PC-9 (cell line): ENCODE measurements at regions of chr1 and their contacts with region 1.

Region 1: DNA sequence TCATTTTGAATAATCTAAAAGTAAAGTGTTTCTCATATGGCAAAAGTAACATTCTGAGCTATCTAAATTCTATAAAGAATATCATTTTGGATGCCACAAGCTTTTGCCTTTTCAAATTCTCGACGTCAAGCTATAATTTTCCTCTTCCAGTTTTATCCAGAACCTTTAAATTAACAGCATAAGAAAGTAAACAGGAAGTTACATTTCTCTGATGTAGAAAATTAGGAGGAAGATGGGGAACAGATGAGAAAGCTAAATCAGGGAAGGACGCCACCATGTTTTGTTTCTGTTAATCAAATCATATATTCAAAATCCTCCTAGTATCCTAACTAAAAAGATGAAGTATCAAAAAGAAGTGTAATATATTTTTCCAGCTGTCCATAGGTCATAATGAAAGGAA is 8.8 kb upstream of the CAMSAP2 start:
- DNase-seq: no peak
- H3K4me3 ChIP-seq: no peak overlapping the region
- H3K27ac ChIP-seq: no peak overlapping the region
- H3K4me1 ChIP-seq: no peaks in the 10 kb centered on the region
- H3K27me3 ChIP-seq: no peaks in the 10 kb centered on the region
- CTCF ChIP-seq: no peak

Region 2: GRCh38 chr1:200740291-200741208 is 10.7 kb after region 1 on chr1:
- CTCF ChIA-PET with region 1: no interaction called
- POLR2A ChIA-PET with region 1: no interaction called
- intact Hi-C with region 1: no loop called
- DNase-seq: no peak
- H3K4me3 ChIP-seq: peak overlapping the region; percentile 99
- H3K27ac ChIP-seq: no peak overlapping the region
- H3K4me1 ChIP-seq: peaks cover 44% of the 10 kb centered on the region
- H3K27me3 ChIP-seq: no peaks in the 10 kb centered on the region
- CTCF ChIP-seq: no peak

Region 3: DNA sequence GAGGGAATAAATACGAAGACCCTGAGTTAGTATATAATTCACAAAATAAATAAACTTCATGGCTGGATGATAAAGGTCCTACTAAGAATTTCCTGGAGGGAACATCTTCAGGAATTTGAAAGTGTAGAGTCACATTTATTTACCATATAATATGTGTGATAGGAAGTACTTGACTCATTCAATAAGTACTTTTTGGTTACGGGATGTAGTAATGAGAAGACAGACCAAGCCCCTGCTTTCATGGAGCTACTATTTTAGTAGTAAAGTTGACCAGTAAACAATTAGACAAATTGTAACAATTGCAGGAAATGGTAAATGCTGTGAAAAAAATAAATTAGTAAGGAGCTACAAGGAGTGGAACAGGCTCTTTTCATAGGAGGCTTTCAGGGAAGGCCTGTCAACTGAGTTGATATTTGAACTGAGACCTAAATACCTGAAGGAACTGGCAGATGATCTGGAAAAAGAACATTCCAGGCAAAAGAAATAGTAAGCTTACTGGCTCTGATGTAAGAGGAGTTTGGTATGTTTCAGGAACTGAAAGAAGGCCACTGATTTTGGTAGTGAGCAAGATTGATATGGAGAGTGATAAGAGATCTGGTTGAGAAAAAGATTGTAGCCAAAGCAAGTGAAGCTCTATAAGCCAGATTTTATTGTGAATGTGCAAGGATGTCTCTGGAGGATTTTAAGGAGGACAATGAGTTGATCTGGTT is 45.0 kb after region 1 on chr1:
- CTCF ChIA-PET with region 1: no interaction called
- POLR2A ChIA-PET with region 1: no interaction called
- intact Hi-C with region 1: loop called (anchors 5 kb)
- DNase-seq: peak in 1 of 2 experiments; percentile 58
- H3K4me3 ChIP-seq: no peak overlapping the region
- H3K27ac ChIP-seq: peak overlapping the region; percentile 24
- H3K4me1 ChIP-seq: peaks cover 15% of the 10 kb centered on the region
- H3K27me3 ChIP-seq: no peaks in the 10 kb centered on the region
- CTCF ChIP-seq: no peak

Region 4: DNA sequence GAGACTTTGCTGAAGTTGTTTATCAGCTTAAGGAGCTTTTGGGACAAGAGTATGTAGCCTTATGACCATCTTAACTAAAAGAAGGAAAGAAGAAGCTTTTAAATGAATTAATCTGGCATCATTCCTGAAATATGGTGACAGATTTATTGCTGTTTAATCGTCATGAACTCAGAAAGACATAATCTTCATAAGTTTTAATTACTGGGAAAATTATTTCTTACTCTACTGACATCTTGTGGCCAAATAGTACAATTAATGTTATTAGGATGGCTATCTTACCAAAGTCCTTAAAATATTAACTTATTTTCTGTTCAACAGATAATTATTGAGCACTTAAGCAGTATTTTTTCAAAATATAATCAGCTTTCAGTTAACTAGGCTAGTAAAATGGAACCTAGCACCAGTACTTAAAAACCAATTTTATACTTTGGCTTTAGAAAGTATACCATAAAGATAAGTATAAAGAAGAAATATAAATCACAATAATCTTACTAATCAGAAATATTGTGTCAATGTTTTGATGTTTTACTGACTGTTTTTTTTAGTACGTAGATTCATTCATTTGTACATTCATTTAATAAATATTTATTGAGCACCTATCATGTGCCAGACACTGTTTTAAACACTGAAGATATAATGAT is 108.2 kb after region 1 on chr1:
- CTCF ChIA-PET with region 1: no interaction called
- POLR2A ChIA-PET with region 1: no interaction called
- intact Hi-C with region 1: no loop called
- DNase-seq: no peak
- H3K4me3 ChIP-seq: no peak overlapping the region
- H3K27ac ChIP-seq: no peak overlapping the region
- H3K4me1 ChIP-seq: no peaks in the 10 kb centered on the region
- H3K27me3 ChIP-seq: no peaks in the 10 kb centered on the region
- CTCF ChIP-seq: peak; percentile 69